CD4-positive, alpha-beta T cell (primary cell): ENCODE measurements at regions of chr5 and their contacts with region 1.

Region 1: DNA sequence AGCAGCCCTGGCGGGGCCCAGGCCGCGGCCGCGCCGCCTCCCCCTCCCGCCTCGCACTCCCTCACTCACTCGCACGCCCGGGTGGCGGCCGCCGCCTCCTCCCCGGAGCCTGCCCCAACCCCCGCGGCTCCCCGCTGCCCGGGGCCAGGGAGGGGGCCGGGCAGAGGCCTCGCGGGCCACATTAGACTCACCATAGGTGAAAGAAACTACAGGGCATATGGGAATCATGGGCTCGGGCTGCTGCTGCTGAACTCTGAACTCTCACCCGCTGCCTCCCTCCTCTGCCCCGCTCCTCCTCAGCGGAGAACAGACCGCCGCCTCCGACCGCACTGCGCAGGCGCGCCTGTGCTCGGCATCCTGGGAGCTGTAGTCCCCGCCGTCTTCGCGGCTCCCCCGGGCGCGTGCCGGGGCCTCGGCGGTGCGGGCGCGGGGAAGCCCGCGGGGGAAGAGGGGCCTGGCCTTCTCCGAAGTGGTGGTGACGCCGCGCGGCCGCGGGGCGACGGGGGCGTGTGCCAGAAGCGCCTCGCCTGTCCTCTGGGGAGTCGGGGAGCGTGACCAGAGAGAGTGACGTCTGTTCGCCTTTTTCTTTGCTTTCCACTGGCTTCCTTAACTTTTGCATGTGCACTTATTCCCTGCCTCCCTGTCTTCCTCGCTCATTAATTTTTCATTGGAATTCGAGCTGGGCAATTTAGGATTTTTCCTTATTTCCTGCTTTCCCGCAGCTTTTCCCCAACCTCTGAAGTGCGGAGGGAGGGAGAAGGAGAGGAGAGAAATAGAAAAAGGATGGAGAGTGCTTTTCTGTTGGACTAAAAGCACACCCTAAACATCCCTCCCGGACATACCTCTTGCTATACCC is at the start of gene ZFR:
- DNase-seq: peak; percentile 84 to 98 (median 92)
- ATAC-seq: peak; percentile 92
- H3K4me3 ChIP-seq: peak within 1 kb of the TSS; percentile 89
- H3K4me3 Mint-ChIP-seq: peak within 1 kb of the TSS; percentile 93
- H3K27ac ChIP-seq: peak within 1 kb of the TSS; percentile 88 to 91
- H3K27ac Mint-ChIP-seq: peak within 1 kb of the TSS; percentile 89
- H3K4me1 ChIP-seq: peaks cover 26% of the 10 kb centered on the region
- H3K4me1 Mint-ChIP-seq: peaks cover 32% of the 10 kb centered on the region
- H3K27me3 ChIP-seq: no peaks in the 10 kb centered on the region
- H3K27me3 Mint-ChIP-seq: no peaks in the 10 kb centered on the region
- CTCF ChIP-seq: no peak
- total RNA-seq, gene ZFR: 58.8 to 61.0 TPM

Region 2: DNA sequence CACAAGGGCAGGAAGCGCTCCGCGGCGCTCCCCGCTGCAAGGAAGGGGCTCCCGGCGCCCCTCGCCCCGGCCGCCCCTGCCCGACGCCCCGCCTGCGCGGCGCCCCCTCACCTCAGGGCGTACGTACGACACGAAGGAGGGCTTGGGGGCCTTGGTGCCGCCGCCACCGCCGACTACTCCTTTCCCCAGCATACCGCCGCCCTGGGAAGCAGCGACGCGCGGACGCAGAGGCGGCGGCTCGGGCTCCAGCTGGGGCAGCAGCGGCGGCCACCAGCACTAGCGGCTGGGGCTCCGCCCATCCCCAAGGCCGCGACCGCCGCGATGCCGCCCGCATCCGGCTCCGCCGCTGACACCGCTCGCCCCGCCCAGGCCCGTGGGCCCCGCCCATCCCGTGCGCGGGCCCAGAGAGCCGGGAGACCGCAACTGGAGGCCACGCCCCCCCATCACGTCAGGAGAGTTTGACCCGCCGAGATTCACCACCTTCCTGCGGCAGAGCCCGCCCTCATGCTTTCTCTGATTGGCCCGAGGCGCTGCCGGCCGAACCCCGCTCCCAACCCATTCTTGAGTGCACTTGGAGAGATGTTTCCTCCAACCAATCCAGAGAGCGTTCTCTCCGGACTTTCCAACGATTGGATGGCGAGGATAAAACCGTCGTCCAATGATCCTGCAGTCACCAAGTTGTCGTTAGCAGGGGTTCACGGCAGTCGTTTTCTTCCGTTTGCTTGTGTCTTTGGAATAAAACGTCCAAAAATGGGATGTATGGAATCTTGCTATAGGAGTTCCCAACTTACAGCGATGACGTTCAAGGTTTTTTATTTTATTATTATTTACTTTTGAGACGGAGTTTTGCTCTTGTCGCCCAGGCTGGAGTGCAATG is 131.8 kb before region 1 on chr5 and contains the start of gene MTMR12:
- CTCF ChIA-PET with region 1: no interaction called
- POLR2A ChIA-PET with region 1: no interaction called
- intact Hi-C with region 1: loop called (anchors 2 to 5 kb)
- DNase-seq: peak; percentile 99 to 100 (median 100)
- ATAC-seq: peak; percentile 92
- H3K4me3 ChIP-seq: peak within 1 kb of the TSS; percentile 87
- H3K4me3 Mint-ChIP-seq: peak within 1 kb of the TSS; percentile 91
- H3K27ac ChIP-seq: peak within 1 kb of the TSS; percentile 65 to 78
- H3K27ac Mint-ChIP-seq: peak within 1 kb of the TSS; percentile 93
- H3K4me1 ChIP-seq: peaks cover 35% of the 10 kb centered on the region
- H3K4me1 Mint-ChIP-seq: peaks cover 43% of the 10 kb centered on the region
- H3K27me3 ChIP-seq: no peaks in the 10 kb centered on the region
- H3K27me3 Mint-ChIP-seq: no peaks in the 10 kb centered on the region
- CTCF ChIP-seq: no peak
- total RNA-seq, gene MTMR12: 15.9 to 18.3 TPM

Region 3: DNA sequence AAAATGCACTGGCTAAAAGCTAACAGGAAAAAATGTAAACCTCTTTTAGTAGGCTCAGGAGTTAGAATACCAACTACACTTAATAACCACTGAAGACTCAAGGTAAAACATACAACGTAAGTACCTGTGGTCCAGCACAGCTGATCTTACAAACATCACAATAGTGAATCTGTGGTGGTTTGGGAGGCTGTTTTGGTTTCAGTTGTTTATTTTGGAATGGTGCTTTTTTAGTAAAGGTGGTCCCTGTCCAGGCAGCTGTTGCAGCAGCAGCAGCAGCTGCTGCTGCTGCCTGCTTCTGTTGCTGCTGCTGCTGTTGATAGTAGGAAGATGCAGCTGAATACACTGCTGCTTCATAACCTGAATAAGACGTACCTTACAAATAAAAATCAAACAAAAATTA is 38.0 kb before region 1 on chr5:
- CTCF ChIA-PET with region 1: no interaction called
- POLR2A ChIA-PET with region 1: no interaction called
- intact Hi-C with region 1: loop called in 1 of 2 experiments (anchors 5 kb)
- DNase-seq: no peak
- ATAC-seq: no peak
- H3K4me3 ChIP-seq: no peak overlapping the region
- H3K4me3 Mint-ChIP-seq: no peak overlapping the region
- H3K27ac ChIP-seq: no peak overlapping the region
- H3K27ac Mint-ChIP-seq: no peak overlapping the region
- H3K4me1 ChIP-seq: no peaks in the 10 kb centered on the region
- H3K4me1 Mint-ChIP-seq: peaks cover 1% of the 10 kb centered on the region
- H3K27me3 ChIP-seq: no peaks in the 10 kb centered on the region
- H3K27me3 Mint-ChIP-seq: no peaks in the 10 kb centered on the region
- CTCF ChIP-seq: no peak